Posterior cingulate gyrus (tissue), 11 donors: ENCODE measurements at regions of chr5 and their contacts with region 1.

Region 1: DNA sequence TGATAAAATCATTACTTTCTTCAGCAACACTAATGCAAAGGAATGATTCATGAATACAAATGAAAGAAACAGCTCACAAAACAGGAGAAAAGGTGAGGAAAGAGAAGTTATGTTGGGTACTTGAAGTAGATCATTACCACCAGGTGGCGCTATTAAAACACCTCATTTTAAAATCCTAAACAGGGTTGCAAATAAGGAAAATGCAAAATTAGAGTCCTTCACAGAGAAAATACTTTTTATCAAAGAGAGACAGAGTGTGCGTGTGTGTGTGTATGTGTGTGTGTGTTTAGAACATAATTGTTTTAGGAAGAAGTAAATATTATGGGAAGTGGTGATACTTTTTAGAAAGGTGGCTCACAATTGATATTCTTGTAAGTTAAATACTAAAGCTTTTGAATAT is 49.5 kb upstream of the CD180 start:
- DNase-seq: no peak

Region 2: GRCh38 chr5:66929995-66930394 is 316.1 kb before region 1 on chr5:
- intact Hi-C with region 1: no loop called
- DNase-seq: no peak

Region 3: GRCh38 chr5:67315082-67315989 is 69.2 kb after region 1 on chr5:
- intact Hi-C with region 1: loop called (anchors 5 kb)
- DNase-seq: peak; percentile 48 to 96 (median 77)

Region 4: DNA sequence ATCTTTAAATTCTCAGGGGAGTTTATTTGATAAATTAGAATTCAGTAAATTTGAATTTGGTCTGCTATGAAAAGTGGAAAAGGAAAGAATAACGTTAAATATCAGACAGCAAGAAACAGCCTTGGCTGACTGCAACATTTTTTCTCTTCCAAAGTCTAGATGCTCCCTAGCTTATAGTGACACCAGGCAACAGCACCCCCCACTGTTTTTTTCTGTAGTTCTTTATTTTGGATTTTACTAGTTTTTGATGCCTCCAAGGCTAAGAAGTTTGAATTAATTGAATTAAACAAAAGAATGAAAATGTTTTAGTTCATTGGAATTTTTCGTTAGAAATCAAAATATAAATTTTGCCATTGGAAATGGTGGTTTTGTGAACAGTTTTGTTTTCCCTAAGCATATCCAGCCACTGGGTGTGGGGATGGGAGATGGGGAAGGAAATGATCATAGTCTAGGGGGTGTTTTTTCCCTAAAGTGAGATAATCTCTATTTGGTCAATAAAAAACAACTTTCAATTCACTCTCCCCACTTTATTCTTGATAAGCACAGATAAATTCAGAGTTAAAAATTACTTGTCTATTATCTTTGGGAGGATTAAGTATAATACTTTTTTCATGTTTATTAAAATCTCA is 149.8 kb after region 1 on chr5:
- intact Hi-C with region 1: loop called (anchors 2 kb)
- DNase-seq: peak in 1 of 10 donors; percentile 32

Region 5: DNA sequence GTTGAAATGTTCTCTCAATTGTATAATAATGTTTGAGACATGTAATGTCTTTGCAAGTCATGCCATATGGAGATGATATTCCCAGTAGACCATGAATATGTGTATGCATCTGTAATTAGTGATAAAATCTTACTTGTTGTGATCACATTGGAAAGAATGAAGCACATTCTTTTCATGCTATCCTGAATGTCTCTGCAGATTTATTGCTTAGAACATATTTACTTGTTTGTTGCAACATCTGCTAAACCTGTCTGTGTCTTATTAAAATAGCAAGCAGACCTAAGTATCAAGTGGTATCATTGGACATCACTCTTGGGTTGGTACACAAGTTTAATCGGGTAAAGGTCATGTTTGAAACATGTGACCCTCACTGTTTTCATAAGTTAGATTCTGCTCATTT is 216.0 kb after region 1 on chr5:
- intact Hi-C with region 1: no loop called
- DNase-seq: no peak

Region 6: DNA sequence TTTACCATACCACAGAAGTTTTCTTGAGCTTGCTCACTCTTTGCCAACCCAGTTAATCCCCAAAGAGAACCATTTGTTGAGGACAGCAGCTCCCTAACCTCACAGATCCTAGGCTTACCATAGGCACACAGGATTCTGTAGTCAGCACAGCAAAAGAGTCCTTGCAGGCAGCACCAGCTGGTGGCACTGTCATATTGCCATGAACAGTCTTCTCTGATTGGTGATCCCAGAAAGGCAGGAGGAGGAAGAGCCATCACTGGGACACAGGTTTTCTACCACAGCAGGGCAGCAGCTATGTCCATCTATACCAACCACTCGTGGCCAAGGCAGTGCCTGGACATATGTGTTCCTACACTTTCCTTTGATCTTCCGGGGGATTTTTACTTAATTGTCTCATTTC is 247.6 kb after region 1 on chr5:
- intact Hi-C with region 1: loop called (anchors 5 kb)
- DNase-seq: peak; percentile 41 to 95 (median 68)

Region 7: DNA sequence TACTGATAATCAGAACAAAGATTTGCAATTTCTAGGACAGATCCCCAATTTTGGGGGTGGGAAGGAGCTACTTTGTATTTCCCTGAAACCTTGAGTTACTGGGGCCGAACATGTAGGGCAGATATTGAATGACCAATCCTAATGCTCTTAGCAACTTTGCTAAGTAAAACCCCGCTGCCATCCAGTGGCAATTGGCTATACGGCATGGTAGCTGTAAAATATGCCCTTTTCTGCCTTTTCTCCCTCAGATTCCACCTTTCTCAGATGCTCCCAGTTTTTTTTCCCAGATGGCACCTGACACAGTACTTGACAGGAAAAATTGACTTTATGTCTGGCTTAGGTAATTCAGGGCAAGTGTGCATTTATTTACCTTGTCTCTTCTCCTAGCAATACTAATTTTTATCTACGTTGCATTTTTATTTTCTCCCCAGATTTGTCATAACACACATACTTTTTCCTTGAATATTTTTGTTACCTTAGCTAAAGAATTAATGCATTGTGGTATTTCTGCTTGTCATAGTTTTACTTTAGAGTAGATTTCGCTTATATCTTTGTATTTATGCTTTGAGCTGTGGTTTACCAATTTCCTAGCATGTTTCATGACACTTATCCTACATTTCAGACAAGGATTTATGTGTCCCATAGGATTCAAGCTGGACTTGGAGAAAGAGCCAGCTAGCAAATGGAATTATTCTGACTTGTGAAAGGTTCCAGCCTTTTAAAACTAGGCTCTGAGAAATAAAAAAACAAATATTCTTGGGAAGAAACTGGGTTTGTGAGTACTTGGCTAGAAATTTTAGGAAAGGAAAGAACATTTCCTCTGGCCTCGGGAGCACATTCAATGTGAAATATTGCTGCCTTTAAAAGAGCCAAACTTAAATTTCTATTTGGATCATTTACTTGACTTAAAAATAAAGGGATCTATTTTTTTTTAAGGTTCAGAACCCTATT is 1006.8 kb after region 1 on chr5:
- intact Hi-C with region 1: loop called (anchors 10 kb)
- DNase-seq: peak in 8 of 10 donors; percentile 48 to 90 (median 64)